Activated CD8-positive, alpha-beta T cell treated with anti-CD3 and anti-CD28 coated beads, Interleukin-2, amount 10 ng/mL, durations not matched to agents 7 days and 5 days (primary cell): ENCODE measurements at regions of chr10 and their contacts with region 1.

Region 1: DNA sequence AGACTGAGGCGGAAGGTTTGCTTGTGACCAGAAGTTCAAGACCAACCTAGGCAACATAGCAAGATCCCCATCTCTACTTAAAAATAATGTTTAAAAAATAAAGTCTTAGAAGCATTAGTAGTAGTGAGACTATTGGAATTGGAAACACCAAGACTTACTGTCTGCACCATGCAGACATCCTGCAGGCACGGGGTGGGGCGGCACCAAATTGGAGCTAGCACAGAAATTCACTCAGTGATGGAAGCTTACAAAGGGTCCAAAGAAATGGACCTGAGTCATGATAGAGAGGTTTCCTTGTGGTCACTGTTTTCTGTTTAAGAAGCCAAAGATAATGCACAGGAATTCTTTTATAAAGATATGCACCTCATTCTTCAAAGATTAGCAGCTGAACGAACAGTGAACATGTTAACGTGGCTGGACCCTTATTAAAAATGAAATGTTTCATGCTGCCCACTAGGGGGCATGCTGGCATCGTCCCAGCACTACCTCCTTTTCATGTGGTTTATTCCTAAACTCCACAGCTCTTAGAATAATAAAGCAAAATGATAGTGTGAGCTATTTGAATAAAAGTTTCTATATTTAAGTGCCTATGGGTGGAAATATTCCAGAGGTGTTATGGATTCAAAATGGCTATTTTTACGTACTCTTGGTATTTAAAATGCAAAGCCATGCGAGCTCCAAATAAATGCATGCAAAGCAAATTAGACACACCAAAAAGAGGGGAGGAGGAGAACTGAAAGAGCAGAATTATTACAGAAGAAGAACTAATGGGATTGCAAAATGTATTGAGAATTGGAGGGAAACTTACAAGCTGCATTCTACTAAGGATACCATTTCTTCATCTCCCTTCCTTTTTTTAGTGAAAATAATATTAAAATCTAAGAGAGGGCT is 28.6 kb downstream of the PDSS1 start:
- DNase-seq: peak; percentile 58
- ATAC-seq: no peak
- H3K4me3 Mint-ChIP-seq: no peak overlapping the region
- H3K27ac Mint-ChIP-seq: no peak overlapping the region
- H3K4me1 Mint-ChIP-seq: peaks cover 12% of the 10 kb centered on the region
- H3K27me3 Mint-ChIP-seq: no peaks in the 10 kb centered on the region

Region 2: DNA sequence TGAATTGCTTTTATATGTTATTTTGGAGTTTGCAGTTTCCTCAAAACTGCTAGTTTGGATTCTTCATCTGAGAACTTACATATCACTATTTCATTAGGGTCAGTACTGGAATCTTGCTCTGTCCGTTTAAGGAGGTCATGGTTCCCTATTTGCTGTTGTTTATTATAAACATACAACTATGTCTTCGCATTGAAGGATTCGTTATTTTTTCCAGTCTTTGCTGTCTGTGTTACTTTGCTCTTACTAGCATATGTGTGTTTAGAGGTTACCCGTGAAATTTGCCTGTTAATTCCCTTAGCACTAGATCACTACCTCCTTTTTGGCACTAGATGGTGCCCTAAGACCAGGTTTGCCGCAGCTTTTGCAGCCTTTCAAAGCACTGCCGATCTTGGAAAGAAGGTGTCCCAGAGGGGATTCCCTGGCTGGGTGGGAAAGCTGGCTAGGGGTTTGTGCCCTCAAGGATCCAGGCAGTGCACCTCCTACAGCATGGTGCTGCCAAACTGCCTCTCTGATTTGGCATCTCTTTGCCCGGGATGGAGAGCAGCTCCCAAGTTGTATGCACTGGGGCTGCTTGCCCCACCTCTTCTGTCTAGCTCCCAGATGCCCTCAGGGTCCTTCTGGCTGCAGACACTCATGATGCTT is 391.0 kb before region 1 on chr10:
- CTCF ChIA-PET with region 1: interaction called, 22 read pairs
- POLR2A ChIA-PET with region 1: no interaction called
- DNase-seq: peak; percentile 76
- ATAC-seq: peak; percentile 87
- H3K4me3 Mint-ChIP-seq: peak overlapping the region; percentile 61
- H3K27ac Mint-ChIP-seq: peak overlapping the region; percentile 72
- H3K4me1 Mint-ChIP-seq: peaks cover 8% of the 10 kb centered on the region
- H3K27me3 Mint-ChIP-seq: no peaks in the 10 kb centered on the region

Region 3: DNA sequence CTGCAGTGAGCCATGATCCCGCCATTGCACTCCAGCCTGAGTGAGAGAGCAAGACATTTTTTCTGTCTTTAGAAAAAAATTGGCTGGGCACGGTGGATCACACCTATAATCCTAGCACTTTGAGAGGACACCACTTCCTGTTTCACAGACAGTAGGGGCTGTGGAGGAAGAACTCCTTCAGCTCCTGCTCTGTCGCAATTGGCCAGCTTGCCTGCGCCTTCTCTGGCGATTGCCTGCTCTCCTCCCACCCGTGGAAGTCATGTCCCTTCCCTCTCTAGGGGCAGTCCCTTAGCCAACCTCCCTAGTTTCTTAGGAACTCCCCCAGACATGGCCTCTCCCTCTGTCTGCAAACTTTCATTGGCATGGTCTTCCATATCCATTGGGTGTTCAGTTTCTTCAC is 19.9 kb before region 1 on chr10:
- CTCF ChIA-PET with region 1: interaction called, 13 read pairs
- POLR2A ChIA-PET with region 1: no interaction called
- DNase-seq: no peak
- ATAC-seq: no peak
- H3K4me3 Mint-ChIP-seq: no peak overlapping the region
- H3K27ac Mint-ChIP-seq: peak overlapping the region; percentile 71
- H3K4me1 Mint-ChIP-seq: peaks cover 30% of the 10 kb centered on the region
- H3K27me3 Mint-ChIP-seq: no peaks in the 10 kb centered on the region

Region 4: GRCh38 chr10:26737730-26738129 is 11.6 kb after region 1 on chr10:
- CTCF ChIA-PET with region 1: interaction called, 26 read pairs
- POLR2A ChIA-PET with region 1: no interaction called
- DNase-seq: peak; percentile 39
- ATAC-seq: peak; percentile 50
- H3K4me3 Mint-ChIP-seq: no peak overlapping the region
- H3K27ac Mint-ChIP-seq: peak overlapping the region; percentile 53
- H3K4me1 Mint-ChIP-seq: peaks cover 29% of the 10 kb centered on the region
- H3K27me3 Mint-ChIP-seq: no peaks in the 10 kb centered on the region

Region 5: DNA sequence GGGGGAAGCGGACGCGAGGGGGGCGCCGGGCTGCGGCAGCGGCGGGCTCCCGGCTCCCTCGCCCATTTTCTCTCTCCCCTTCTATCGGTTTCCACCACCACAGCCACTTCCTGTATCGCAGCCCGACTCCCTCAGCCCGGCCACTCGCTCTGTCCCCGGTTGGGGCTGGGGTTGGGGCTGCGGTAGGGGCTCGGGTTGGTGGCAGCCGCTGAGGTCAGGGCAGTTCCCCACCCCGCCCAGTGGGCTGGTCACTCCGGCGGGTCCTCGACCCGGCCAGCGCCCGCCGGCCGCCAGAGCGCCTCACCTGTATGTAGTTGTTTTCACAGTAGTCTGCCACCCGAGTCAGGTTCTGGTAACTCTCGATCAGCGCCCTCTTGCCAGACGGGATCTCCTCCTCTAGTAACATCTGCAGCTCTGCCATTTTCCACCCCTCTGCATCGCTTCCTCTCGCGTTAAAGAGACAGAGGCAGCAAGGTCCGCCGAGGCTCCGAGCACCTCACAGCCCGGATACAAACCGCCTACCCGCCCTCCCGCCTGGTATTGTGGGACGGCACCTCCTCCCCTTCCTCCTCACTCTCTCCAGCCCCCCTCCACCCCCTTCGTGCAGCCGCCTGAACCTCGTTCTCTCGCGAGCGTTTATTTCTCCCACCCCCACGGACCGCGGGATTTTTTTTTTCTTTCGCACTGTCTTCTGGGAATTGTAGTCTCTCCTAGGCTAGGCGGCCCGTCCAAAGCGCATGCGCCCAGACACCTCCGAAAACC is 134.5 kb after region 1 on chr10 and contains the start of gene ABI1:
- CTCF ChIA-PET with region 1: interaction called, 18 read pairs
- POLR2A ChIA-PET with region 1: interaction called, 3 read pairs
- DNase-seq: peak; percentile 99
- ATAC-seq: peak; percentile 90
- H3K4me3 Mint-ChIP-seq: peak within 1 kb of the TSS; percentile 95
- H3K27ac Mint-ChIP-seq: peak within 1 kb of the TSS; percentile 100
- H3K4me1 Mint-ChIP-seq: peaks cover 30% of the 10 kb centered on the region
- H3K27me3 Mint-ChIP-seq: peaks cover 10% of the 10 kb centered on the region
- total RNA-seq, gene ABI1: 46.9 to 49.7 TPM

Region 6: DNA sequence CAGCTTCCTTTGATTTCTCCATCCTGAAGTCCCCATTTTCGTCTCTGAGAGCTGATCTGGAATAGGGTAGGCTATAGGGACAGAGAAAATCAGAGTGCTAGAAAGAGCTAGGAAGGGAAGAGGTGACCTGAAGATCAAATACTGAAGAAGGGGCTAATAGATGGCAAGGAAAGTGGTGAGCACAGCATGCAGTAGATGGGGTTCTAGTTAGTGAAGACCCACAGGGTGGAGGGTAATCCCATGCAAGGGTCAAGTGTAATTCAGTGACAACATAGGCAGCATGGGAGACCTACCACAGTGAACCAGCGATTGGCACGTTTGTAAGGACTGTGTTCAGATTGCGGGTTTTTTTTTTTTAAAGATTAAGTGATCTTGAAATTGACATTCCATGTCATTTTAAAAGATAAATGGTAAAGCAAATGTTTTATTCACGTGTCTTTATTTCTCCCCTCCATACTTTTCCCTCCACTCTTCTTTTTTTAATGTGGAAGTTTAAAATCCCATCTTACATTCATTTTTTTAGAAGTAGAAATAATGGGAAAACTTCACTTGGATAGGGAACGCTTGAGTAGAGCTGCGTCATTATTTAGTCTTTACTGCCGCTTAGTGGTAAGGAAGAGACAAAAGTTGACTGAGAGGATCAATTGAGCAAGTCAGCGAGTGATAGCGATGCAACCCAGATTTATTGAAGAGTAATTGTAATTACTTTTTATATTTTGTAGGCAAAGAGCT is 155.7 kb after region 1 on chr10:
- CTCF ChIA-PET with region 1: interaction called, 105 read pairs
- POLR2A ChIA-PET with region 1: interaction called, 3 read pairs
- DNase-seq: no peak
- ATAC-seq: peak; percentile 76
- H3K4me3 Mint-ChIP-seq: no peak overlapping the region
- H3K27ac Mint-ChIP-seq: no peak overlapping the region
- H3K4me1 Mint-ChIP-seq: no peaks in the 10 kb centered on the region
- H3K27me3 Mint-ChIP-seq: peaks cover 18% of the 10 kb centered on the region